ENCODE measurements at regions of chr20 and their contacts with region 1.

Region 1: GRCh38 chr20:35629427-35630145 is 14.0 kb downstream of the SPAG4 start:
- DNase-seq: no peak
- ATAC-seq: no peak
- H3K4me3 ChIP-seq: no peak overlapping the region
- H3K4me3 Mint-ChIP-seq: no peak overlapping the region
- H3K27ac ChIP-seq: no peak overlapping the region
- H3K27ac Mint-ChIP-seq: no peak overlapping the region
- H3K4me1 ChIP-seq: peaks cover 0 to 3% of the 10 kb centered on the region in 2 experiments
- H3K4me1 Mint-ChIP-seq: peaks cover 2 to 17% (median 5%) of the 10 kb centered on the region in 3 donors
- H3K27me3 ChIP-seq: no peaks in the 10 kb centered on the region
- H3K27me3 Mint-ChIP-seq: no peaks in the 10 kb centered on the region

Region 2: DNA sequence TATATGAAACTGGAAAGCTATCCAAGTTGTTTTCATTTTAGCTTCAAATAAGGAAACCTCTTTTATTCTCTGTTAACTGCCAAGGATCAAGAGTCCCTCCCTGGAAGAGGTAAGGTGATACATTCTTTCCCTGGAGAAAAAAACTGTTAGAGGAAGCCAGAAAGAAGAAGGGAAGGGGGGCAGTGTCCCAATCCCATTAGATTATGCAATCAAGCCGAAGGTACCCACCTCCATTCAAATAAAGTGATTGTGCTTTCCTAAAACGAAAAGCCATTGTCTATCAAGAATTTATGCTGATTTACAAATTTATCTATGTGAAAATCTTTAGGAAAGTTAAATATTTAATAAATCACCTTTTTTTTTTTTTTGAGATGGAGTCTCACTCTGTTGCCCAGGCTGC is 208.3 kb before region 1 on chr20:
- CTCF ChIA-PET with region 1: no interaction called
- POLR2A ChIA-PET with region 1: interaction called in 1 of 2 experiments, 10 read pairs
- DNase-seq: no peak
- ATAC-seq: no peak
- H3K4me3 ChIP-seq: no peak overlapping the region
- H3K4me3 Mint-ChIP-seq: no peak overlapping the region
- H3K27ac ChIP-seq: no peak overlapping the region
- H3K27ac Mint-ChIP-seq: no peak overlapping the region
- H3K4me1 ChIP-seq: no peaks in the 10 kb centered on the region
- H3K4me1 Mint-ChIP-seq: no peaks in the 10 kb centered on the region
- H3K27me3 ChIP-seq: peaks cover 5 to 22% of the 10 kb centered on the region in 2 experiments
- H3K27me3 Mint-ChIP-seq: peaks cover 11 to 13% of the 10 kb centered on the region in 2 donors

Region 3: DNA sequence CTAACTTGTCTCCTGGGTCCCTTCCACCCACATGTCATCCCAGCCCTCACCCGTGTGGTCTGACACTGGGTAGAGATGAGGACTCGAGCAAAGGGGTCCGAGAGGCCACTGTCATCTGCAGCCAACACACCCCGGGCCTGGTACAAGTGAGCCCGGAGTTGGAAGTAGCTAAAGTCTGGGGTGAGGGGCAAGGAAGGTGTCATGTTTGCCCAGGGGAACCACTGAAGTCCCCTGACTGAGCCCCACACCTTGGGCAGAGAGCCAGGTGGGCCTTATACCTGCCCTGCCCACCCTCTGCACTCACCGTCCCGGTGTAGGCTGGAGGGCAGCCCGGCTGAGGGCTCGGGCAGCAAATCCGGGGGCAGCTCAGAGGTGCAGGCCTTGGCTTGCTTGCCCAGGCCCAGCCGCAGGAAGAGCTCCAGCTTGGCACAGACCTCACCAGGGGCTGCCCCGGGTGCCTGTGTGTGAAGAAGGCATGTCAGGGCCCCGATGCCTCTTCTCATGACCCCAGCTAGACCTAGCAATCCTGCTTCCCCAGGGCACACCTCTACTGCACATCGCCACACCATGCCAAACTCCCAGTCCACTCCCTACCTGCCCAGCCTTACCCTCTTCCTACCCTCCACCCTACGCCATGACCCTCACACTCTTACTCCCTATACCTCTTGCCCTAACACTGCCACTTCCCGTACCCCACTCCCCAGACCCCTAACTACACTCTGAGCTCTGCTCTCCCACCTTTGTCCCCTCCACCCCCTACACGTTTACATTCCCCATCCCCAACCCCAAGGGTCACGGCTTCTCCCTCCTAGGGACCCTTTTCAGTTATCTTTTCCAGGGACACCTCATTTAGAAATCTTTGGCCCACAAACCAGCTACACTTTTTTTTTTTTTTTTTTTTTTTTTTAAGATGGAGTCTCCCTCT is 45.7 kb before region 1 on chr20:
- CTCF ChIA-PET with region 1: no interaction called
- POLR2A ChIA-PET with region 1: no interaction called
- DNase-seq: no peak
- ATAC-seq: no peak
- H3K4me3 ChIP-seq: no peak overlapping the region
- H3K4me3 Mint-ChIP-seq: no peak overlapping the region
- H3K27ac ChIP-seq: no peak overlapping the region
- H3K27ac Mint-ChIP-seq: no peak overlapping the region
- H3K4me1 ChIP-seq: no peaks in the 10 kb centered on the region
- H3K4me1 Mint-ChIP-seq: peaks cover 0 to 3% (median 0%) of the 10 kb centered on the region in 3 donors
- H3K27me3 ChIP-seq: peaks cover 0 to 14% of the 10 kb centered on the region in 2 experiments
- H3K27me3 Mint-ChIP-seq: no peaks in the 10 kb centered on the region

Measured in T-cell (primary cell).